H1 (cell line): ENCODE measurements at regions of chrX and their contacts with region 1.

Region 1: DNA sequence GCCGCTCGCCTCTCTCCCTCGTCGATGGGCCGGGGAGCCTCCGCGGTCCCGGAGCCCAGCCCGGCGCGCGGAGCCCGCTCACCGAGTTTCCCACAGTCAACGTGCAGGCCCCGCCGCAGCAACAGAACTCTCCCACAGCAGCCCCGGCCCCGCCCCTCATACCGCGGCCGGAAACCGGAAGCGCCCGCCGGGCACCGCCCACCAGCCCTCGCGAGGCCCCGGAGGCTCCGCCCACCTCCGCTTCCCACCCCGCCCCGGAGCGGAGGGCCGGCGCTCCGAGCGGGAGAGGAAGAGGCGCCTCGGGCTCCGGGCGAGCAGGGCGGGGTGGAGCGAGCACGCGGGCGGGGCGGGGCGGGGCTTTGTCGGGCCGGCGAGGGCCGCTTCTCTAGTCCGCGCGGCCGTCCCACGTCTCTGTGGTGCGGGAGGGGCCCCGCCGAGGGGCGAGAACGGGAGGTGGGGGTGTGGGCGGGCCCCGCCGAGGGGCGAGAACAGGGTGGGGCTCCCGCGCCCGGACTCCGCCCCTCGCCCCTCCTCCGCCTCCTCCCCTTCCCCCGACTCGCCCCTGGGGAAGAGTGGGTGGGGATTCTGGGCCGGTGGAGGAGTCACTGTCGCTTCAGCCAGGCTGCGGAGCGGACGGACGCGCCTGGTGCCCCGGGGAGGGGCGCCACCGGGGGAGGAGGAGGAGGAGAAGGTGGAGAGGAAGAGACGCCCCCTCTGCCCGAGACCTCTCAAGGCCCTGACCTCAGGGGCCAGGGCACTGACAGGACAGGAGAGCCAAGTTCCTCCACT is at the starts of genes ABCD1 and BCAP31:
- DNase-seq: peak; percentile 29 to 87
- H3K4me3 ChIP-seq: peak within 1 kb of the TSS; percentile 45 to 88 (median 66)
- H3K27ac ChIP-seq: no peak within 1 kb of the TSS; the same call in 1 of the 2 replicates
- H3K4me1 ChIP-seq: peaks cover 0 to 24% (median 13%) of the 10 kb centered on the region in 4 experiments; a peak in 6 of 7 replicates
- H3K27me3 ChIP-seq: no peaks in the 10 kb centered on the region
- CTCF ChIP-seq: no peak
- EP300 ChIP-seq: no peak
- POLR2A ChIP-seq: no peak
- RAD21 ChIP-seq: no peak
- total RNA-seq, gene ABCD1: 4.6 and 6.6 TPM in 2 replicates
- total RNA-seq, gene BCAP31: 157 and 159 TPM in 2 replicates

Region 2: DNA sequence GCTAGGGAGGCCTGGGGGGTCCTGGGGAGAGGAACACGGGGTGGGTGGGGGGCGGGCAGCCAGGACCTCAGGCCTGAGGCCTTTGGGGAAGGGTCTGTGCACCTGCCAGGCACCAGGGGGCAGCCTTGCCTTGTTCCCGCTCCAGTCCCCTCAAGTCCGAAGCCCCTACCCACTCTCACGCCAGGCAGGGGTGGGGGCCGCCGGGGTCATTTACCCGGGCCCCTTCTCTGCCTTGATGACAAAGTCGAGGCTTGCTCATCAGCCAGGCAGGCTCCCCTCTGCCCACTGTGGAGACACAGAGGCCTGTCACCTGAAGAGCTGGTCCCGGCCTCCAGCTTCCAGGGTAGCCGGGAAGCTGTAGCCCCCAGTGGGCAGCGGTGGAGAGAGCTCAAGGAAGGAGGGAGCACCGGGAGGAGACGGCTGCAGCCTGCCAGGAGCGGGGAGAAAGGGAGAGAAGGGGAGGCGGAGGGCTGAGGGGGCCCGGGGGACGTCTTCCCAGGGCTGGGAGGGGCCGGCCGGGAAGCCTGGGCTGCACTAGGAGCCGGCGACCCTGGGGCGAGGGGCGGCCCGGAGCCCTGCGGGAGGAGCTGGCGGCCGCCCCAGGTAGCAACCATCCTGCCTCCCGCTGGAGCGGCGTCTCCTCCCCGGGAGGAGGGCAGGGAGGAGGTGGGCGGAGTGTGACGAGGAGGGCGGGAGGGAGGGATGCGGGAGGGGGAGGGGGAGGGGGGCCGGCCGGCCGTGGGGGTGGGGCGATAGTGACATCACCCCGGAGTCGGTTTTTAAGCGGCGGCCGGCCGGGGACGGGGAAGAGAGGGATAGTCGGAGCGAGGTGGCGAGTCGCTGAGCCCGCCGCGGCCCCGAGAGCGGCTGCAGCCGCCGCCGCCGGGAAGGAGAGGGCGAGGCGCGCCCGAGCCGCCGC is 37.1 kb before region 1 on chrX and contains the start of gene SLC6A8:
- CTCF ChIA-PET with region 1: no interaction called
- POLR2A ChIA-PET with region 1: interaction called, 11 read pairs
- DNase-seq: peak in 1 of 2 experiments; percentile 69
- H3K4me3 ChIP-seq: peak within 1 kb of the TSS; percentile 47 to 58 (median 51)
- H3K27ac ChIP-seq: no peak within 1 kb of the TSS
- H3K4me1 ChIP-seq: peaks cover 0 to 27% (median 11%) of the 10 kb centered on the region in 4 experiments; a peak in 6 of 7 replicates
- H3K27me3 ChIP-seq: no peaks in the 10 kb centered on the region
- CTCF ChIP-seq: peak in 2 of 3 experiments; percentile 30 to 33; a peak in 3 of 4 replicates
- EP300 ChIP-seq: no peak
- POLR2A ChIP-seq: no peak; a peak in 1 of 3 replicates
- RAD21 ChIP-seq: peak; percentile 19 to 44; a peak in 3 of 4 replicates
- total RNA-seq, gene SLC6A8: 94.7 and 98.5 TPM in 2 replicates

Region 3: DNA sequence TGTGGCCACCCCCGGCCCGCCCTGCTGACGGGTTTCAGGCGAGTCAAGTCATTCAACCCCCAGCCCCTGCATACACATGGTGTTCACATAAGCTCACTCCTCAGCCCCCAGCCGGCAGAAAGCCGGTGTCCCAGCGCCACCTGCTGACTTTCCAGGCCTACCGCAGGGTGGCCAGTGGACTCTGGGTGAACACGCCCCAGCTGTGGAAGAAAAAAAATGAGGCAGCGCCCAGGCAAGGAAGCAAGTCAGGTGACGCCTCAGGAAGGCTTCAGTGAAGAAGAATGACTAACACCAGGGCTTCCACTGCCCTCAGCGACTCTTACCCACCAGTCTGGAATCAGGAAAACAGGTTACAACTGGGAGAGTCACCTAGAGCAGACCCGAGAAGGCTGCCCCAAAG is 16.0 kb before region 1 on chrX:
- CTCF ChIA-PET with region 1: interaction called, 10 read pairs
- POLR2A ChIA-PET with region 1: interaction called, 5 read pairs
- DNase-seq: peak in 1 of 2 experiments; percentile 67
- H3K4me3 ChIP-seq: no peak overlapping the region
- H3K27ac ChIP-seq: no peak overlapping the region
- H3K4me1 ChIP-seq: peaks cover 0 to 2% (median 0%) of the 10 kb centered on the region in 4 experiments; a peak in 3 of 7 replicates
- H3K27me3 ChIP-seq: no peaks in the 10 kb centered on the region
- CTCF ChIP-seq: peak in 2 of 3 experiments; percentile 59 to 64; a peak in 3 of 4 replicates
- EP300 ChIP-seq: no peak
- POLR2A ChIP-seq: no peak
- RAD21 ChIP-seq: peak; percentile 52 to 70

Region 4: GRCh38 chrX:153831429-153832150 is 107.1 kb after region 1 on chrX:
- CTCF ChIA-PET with region 1: no interaction called
- POLR2A ChIA-PET with region 1: no interaction called
- DNase-seq: no peak
- H3K4me3 ChIP-seq: peak overlapping the region; percentile 32 to 61 (median 46); a peak in 6 of 8 replicates
- H3K27ac ChIP-seq: no peak overlapping the region
- H3K4me1 ChIP-seq: peaks cover 0 to 15% (median 8%) of the 10 kb centered on the region in 4 experiments; a peak in 5 of 7 replicates
- H3K27me3 ChIP-seq: peaks cover 0 to 6% (median 2%) of the 10 kb centered on the region in 4 experiments; a peak in 3 of 7 replicates
- CTCF ChIP-seq: no peak
- EP300 ChIP-seq: no peak
- POLR2A ChIP-seq: no peak
- RAD21 ChIP-seq: no peak

Region 5: DNA sequence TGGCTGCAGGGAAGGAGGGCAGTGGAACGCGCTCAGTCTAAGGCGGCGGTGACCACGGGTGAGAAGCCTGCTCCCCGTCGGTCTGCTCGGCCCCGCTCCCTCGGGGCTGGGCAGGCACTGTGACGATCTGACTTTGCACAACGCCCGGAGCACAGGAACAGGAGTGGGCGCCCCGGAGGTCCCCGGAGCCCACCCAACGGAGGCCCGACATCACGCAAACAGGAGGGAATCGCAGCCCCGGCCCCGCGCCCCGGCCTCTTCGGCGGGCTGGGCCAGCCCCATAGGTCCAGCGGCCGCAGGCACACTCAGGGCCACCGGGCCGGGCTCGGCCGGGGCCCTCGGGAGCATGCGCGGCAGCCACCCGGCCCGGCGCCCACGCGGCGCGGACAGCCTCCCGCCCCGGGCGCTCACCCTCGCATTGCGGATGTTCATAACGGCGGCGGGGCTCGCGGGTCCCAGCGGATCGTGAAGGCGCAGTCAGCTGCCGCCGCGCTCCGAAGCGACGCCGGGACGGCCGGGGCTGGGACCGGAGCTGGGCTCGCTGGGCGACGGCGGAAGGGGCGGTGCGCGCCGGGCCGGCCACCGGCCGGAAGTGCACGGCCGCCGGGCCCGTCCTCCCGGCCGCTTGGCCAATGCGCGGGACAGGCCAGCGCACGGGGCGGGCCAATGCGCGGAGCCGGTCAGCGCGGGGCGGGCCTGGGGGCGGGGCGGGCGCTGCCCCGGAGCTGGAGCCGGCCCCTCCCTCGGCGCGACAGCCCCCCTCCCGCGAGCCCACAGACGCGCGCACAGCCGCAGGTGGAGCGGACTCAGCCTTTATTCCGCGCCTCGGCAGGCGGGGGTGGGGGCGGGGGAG is 210.3 kb after region 1 on chrX and contains the start of gene NAA10:
- CTCF ChIA-PET with region 1: no interaction called
- POLR2A ChIA-PET with region 1: no interaction called
- DNase-seq: peak in 1 of 2 experiments; percentile 63
- H3K4me3 ChIP-seq: peak within 1 kb of the TSS; percentile 57 to 87 (median 66)
- H3K27ac ChIP-seq: no peak within 1 kb of the TSS
- H3K4me1 ChIP-seq: peaks cover 0 to 5% (median 4%) of the 10 kb centered on the region in 4 experiments; a peak in 5 of 7 replicates
- H3K27me3 ChIP-seq: no peaks in the 10 kb centered on the region
- CTCF ChIP-seq: no peak
- EP300 ChIP-seq: no peak
- POLR2A ChIP-seq: no peak
- RAD21 ChIP-seq: no peak
- total RNA-seq, gene NAA10: 98.1 and 98.8 TPM in 2 replicates